ENCODE measurements at regions of chr10 and their contacts with region 1.

Region 1: DNA sequence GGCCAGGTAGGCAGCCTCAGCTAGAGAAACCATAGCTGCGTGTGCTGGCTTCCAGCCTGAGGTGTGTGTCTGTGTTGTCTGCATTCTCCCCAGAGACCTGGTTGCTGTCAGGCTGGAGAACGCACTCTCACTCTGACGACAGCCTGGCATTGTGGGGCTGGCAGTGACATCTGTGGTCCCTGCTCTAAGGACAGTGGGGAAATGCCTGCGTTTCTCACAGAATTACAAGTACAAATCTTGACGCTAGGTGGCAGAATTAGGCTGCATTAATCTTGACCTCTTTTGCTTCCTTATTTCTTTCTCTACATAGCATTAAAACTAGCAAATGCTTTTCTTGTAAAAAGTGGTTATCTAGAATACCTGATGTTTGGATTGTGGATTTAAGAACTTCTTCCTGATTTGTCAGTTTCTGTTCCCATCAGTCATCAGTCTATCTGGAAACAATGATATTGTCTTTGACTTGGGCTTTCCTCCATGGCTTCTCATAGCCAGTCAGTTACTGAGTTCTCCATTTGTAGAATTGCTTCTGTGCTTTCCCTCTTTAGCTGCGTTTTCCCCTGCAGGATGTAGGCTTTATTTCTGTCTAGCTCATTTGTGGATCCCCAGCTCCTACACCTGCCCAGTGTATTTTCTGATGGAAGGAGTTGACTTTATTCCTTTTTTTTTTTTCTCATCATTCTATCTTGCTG is 86.0 kb downstream of the FANK1 start:
- DNase-seq: peak in 1 of 2 experiments; percentile 49
- H3K4me3 ChIP-seq: no peak overlapping the region
- H3K4me3 Mint-ChIP-seq: no peak overlapping the region
- H3K27ac Mint-ChIP-seq: no peak overlapping the region
- H3K4me1 ChIP-seq: no peaks in the 10 kb centered on the region
- H3K4me1 Mint-ChIP-seq: peaks cover 7% of the 10 kb centered on the region
- H3K27me3 ChIP-seq: no peaks in the 10 kb centered on the region
- H3K27me3 Mint-ChIP-seq: peaks cover 10% of the 10 kb centered on the region
- CTCF ChIP-seq: peak; percentile 51 to 66

Region 2: DNA sequence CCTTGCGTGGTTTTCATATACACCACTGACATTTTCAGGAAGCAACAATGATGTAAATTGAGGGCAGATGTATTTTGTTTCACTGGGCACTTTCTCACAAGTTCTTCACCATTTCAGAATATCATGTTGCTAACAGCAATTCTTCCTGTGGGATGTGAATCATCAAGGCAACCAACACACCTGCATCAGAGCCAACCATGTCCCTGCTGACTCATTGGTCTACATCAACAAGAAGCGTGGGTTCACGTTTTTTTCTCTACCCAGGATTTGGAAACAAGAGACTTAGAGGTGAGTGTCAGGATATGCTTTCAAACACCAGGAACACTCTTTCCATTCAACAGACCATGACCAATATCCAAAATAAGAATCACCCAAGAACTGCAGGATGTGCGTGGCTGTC is 503.3 kb before region 1 on chr10:
- CTCF ChIA-PET with region 1: no interaction called
- POLR2A ChIA-PET with region 1: no interaction called
- intact Hi-C with region 1: no loop called
- DNase-seq: no peak
- H3K4me3 ChIP-seq: no peak overlapping the region
- H3K4me3 Mint-ChIP-seq: no peak overlapping the region
- H3K27ac Mint-ChIP-seq: no peak overlapping the region
- H3K4me1 ChIP-seq: no peaks in the 10 kb centered on the region
- H3K4me1 Mint-ChIP-seq: no peaks in the 10 kb centered on the region
- H3K27me3 ChIP-seq: peaks cover 1% of the 10 kb centered on the region
- H3K27me3 Mint-ChIP-seq: peaks cover 30% of the 10 kb centered on the region
- CTCF ChIP-seq: no peak

Region 3: GRCh38 chr10:125868372-125868975 is 113.9 kb before region 1 on chr10:
- CTCF ChIA-PET with region 1: no interaction called
- POLR2A ChIA-PET with region 1: no interaction called
- intact Hi-C with region 1: loop called (anchors 1 kb)
- DNase-seq: peak in 1 of 2 experiments; percentile 56
- H3K4me3 ChIP-seq: no peak overlapping the region
- H3K4me3 Mint-ChIP-seq: no peak overlapping the region
- H3K27ac Mint-ChIP-seq: no peak overlapping the region
- H3K4me1 ChIP-seq: no peaks in the 10 kb centered on the region
- H3K4me1 Mint-ChIP-seq: peaks cover 6% of the 10 kb centered on the region
- H3K27me3 ChIP-seq: no peaks in the 10 kb centered on the region
- H3K27me3 Mint-ChIP-seq: no peaks in the 10 kb centered on the region
- CTCF ChIP-seq: peak; percentile 79 to 83

Region 4: GRCh38 chr10:126097558-126098225 is 115.3 kb after region 1 on chr10:
- CTCF ChIA-PET with region 1: interaction called, 3 read pairs
- POLR2A ChIA-PET with region 1: no interaction called
- intact Hi-C with region 1: loop called (anchors 2 kb)
- DNase-seq: peak in 1 of 2 experiments; percentile 10
- H3K4me3 ChIP-seq: no peak overlapping the region
- H3K4me3 Mint-ChIP-seq: no peak overlapping the region
- H3K27ac Mint-ChIP-seq: no peak overlapping the region
- H3K4me1 ChIP-seq: no peaks in the 10 kb centered on the region
- H3K4me1 Mint-ChIP-seq: no peaks in the 10 kb centered on the region
- H3K27me3 ChIP-seq: no peaks in the 10 kb centered on the region; the same call in 1 of the 2 replicates
- H3K27me3 Mint-ChIP-seq: peaks cover 3% of the 10 kb centered on the region
- CTCF ChIP-seq: peak; percentile 19 to 37

Region 5: DNA sequence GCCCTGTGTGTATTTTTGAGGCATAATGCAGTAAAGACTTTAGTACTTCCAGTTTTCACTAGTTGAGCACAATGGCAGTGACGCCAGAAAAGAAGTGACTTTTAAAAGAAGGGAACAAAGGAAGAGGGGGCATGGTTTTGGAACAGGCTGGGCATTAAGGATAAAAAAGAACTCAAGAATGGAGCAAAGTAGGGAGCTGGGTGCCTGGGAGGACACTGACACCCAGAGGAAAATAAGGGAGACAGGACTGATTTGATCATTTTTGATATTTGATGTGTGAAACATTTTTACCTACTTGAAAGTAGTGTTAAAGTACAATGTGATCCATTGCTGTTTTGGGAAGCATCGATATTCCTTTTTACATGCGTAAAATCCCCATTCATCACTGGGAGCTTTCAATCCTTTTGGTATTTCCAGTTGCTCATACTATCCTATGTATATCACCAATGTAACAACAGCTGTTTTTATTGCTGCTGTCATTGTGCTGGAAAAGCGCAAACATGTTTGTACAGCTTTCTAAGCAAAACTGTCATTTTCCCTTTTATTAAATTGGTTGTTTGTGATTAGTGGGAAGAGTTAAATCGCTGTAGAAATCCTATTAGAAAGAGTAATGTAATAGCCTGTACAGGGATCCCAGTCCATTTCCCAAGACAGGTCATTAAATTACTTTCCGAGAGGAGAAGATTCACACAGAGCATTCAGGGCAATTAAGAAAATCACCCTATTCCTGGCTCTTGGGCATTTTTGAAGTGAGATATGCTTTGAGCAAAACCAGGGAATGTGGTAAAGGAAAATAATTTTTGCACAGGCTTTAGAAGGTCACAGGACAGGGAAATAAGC is 320.6 kb after region 1 on chr10:
- CTCF ChIA-PET with region 1: no interaction called
- POLR2A ChIA-PET with region 1: no interaction called
- intact Hi-C with region 1: loop called (anchors 2 kb)
- DNase-seq: no peak
- H3K4me3 ChIP-seq: no peak overlapping the region
- H3K4me3 Mint-ChIP-seq: no peak overlapping the region
- H3K27ac Mint-ChIP-seq: no peak overlapping the region
- H3K4me1 ChIP-seq: no peaks in the 10 kb centered on the region
- H3K4me1 Mint-ChIP-seq: no peaks in the 10 kb centered on the region
- H3K27me3 ChIP-seq: no peaks in the 10 kb centered on the region
- H3K27me3 Mint-ChIP-seq: peaks cover 22% of the 10 kb centered on the region
- CTCF ChIP-seq: no peak

Region 6: GRCh38 chr10:126387023-126387921 is 404.9 kb after region 1 on chr10:
- CTCF ChIA-PET with region 1: interaction called, 3 read pairs
- POLR2A ChIA-PET with region 1: no interaction called
- intact Hi-C with region 1: loop called (anchors 1 kb)
- DNase-seq: peak; percentile 47 to 67
- H3K4me3 ChIP-seq: no peak overlapping the region
- H3K4me3 Mint-ChIP-seq: peak overlapping the region; percentile 73
- H3K27ac Mint-ChIP-seq: no peak overlapping the region
- H3K4me1 ChIP-seq: no peaks in the 10 kb centered on the region
- H3K4me1 Mint-ChIP-seq: peaks cover 10% of the 10 kb centered on the region
- H3K27me3 ChIP-seq: no peaks in the 10 kb centered on the region
- H3K27me3 Mint-ChIP-seq: peaks cover 32% of the 10 kb centered on the region
- CTCF ChIP-seq: peak; percentile 74

Region 7: GRCh38 chr10:126504063-126504739 is 521.8 kb after region 1 on chr10:
- CTCF ChIA-PET with region 1: interaction called, 3 read pairs
- POLR2A ChIA-PET with region 1: no interaction called
- intact Hi-C with region 1: loop called (anchors 1 kb)
- DNase-seq: peak; percentile 45 to 71
- H3K4me3 ChIP-seq: no peak overlapping the region
- H3K4me3 Mint-ChIP-seq: no peak overlapping the region
- H3K27ac Mint-ChIP-seq: no peak overlapping the region
- H3K4me1 ChIP-seq: no peaks in the 10 kb centered on the region
- H3K4me1 Mint-ChIP-seq: no peaks in the 10 kb centered on the region
- H3K27me3 ChIP-seq: no peaks in the 10 kb centered on the region
- H3K27me3 Mint-ChIP-seq: peaks cover 13% of the 10 kb centered on the region
- CTCF ChIP-seq: peak; percentile 71 to 78

Region 8: GRCh38 chr10:126749015-126749655 is 766.7 kb after region 1 on chr10:
- CTCF ChIA-PET with region 1: no interaction called
- POLR2A ChIA-PET with region 1: no interaction called
- intact Hi-C with region 1: loop called (anchors 10 kb)
- DNase-seq: peak; percentile 73 to 81
- H3K4me3 ChIP-seq: no peak overlapping the region
- H3K4me3 Mint-ChIP-seq: no peak overlapping the region
- H3K27ac Mint-ChIP-seq: no peak overlapping the region
- H3K4me1 ChIP-seq: no peaks in the 10 kb centered on the region
- H3K4me1 Mint-ChIP-seq: peaks cover 11% of the 10 kb centered on the region
- H3K27me3 ChIP-seq: no peaks in the 10 kb centered on the region
- H3K27me3 Mint-ChIP-seq: no peaks in the 10 kb centered on the region
- CTCF ChIP-seq: peak; percentile 69 to 78